AG04449 (cell line): ENCODE measurements at regions of chr1 and their contacts with region 1.

Region 1: GRCh38 chr1:204207136-204207616 is 6.6 kb downstream of the GOLT1A start:
- DNase-seq: no peak
- H3K4me3 ChIP-seq: no peak overlapping the region
- CTCF ChIP-seq: peak; percentile 94

Region 2: GRCh38 chr1:203534527-203535230 is 672.5 kb before region 1 on chr1:
- CTCF ChIA-PET with region 1: no interaction called
- POLR2A ChIA-PET with region 1: no interaction called
- DNase-seq: peak; percentile 89
- H3K4me3 ChIP-seq: no peak overlapping the region
- CTCF ChIP-seq: no peak

Region 3: GRCh38 chr1:203871107-203871875 is 335.9 kb before region 1 on chr1:
- CTCF ChIA-PET with region 1: interaction called, 24 read pairs
- POLR2A ChIA-PET with region 1: no interaction called
- DNase-seq: no peak
- H3K4me3 ChIP-seq: no peak overlapping the region
- CTCF ChIP-seq: peak; percentile 91

Region 4: GRCh38 chr1:204162231-204163074 is 44.7 kb before region 1 on chr1:
- CTCF ChIA-PET with region 1: interaction called, 548 read pairs
- POLR2A ChIA-PET with region 1: interaction called, 3 read pairs
- DNase-seq: peak; percentile 12
- H3K4me3 ChIP-seq: no peak overlapping the region
- CTCF ChIP-seq: peak; percentile 98

Region 5: DNA sequence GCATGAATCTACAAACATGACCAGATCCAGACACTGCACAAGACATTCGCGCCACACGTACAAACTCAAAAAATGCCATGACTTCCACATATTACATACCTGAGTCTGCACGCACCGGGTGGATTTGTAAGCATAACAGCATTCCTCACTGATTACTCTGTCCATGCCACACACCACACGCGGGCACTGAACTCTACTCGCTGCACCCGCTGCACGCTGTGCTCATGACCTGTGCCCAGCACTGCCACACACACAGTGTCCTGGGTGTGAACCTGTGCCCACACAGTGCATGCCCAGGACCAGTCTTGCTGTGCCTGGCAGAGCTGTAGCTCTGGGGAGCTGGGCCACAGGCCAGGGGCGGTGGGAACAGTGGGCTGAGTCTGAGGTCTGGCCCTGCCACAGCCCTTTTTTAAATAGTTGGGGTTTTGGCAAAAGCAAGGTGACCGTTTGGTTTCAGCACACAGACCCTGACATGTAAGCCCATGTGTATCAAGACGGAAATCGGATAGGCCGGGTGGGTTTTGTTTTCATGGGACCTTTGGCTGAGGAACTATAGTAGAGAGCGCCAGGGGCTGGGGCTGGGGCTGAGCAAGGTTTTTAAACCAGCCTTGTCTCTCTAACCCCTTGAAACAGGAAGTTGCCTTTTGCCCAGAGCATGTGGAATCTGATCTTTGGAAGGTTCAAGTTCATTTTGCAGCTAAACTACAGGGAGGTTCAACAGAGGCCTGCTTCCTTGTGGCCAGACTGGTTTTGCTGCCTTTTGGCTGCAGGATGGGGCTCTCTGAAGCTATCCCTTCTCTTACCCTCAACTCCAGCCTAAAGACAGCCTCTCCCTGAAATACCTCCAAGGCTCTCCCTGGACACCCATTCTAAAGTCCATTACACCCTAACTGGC is 18.9 kb after region 1 on chr1:
- CTCF ChIA-PET with region 1: interaction called, 30 read pairs
- POLR2A ChIA-PET with region 1: no interaction called
- DNase-seq: no peak
- H3K4me3 ChIP-seq: no peak overlapping the region
- CTCF ChIP-seq: no peak

Region 6: GRCh38 chr1:204263254-204263910 is 56.2 kb after region 1 on chr1:
- CTCF ChIA-PET with region 1: interaction called, 20 read pairs
- POLR2A ChIA-PET with region 1: no interaction called
- DNase-seq: no peak
- H3K4me3 ChIP-seq: no peak overlapping the region
- CTCF ChIP-seq: no peak

Region 7: DNA sequence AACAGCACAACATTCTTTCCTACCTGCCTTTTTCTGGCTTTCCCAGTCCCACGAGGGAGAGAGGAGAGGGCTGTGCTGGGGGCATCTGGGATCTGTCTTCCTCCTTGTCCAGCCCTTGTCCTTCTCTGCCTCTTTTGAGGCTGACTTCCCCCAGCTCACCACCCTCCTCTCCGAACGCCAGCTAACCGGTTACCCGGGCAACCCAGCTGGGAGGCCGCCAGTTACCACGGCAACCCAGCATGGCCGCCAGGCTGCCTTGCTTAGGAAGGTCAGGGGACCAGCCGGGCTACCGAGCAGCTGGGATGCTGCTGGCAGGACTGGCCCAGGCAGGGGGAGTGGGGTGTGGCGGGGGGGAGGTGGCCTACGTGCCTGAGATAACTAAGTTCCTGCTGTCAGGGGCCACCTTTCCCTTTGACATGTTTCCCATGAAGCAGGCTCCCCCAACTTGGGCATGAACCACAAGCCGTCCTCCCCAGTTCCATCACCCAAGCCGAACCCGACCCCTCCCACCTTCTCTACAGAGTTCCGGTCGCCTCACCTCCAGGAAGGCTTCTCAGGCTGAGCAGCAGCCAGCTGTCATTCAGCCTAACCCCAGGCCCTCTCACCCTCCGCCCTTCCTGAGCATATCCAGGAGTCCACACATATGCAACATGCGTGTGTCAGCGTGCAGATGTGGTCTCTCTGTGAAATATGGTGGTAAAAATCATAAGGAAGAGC is 143.8 kb after region 1 on chr1:
- CTCF ChIA-PET with region 1: interaction called, 18 read pairs
- POLR2A ChIA-PET with region 1: no interaction called
- DNase-seq: no peak
- H3K4me3 ChIP-seq: peak overlapping the region; percentile 45
- CTCF ChIP-seq: no peak

Region 8: GRCh38 chr1:204377795-204378608 is 170.8 kb after region 1 on chr1:
- CTCF ChIA-PET with region 1: interaction called, 13 read pairs
- POLR2A ChIA-PET with region 1: no interaction called
- DNase-seq: no peak
- H3K4me3 ChIP-seq: peak overlapping the region; percentile 50
- CTCF ChIP-seq: no peak